HepG2 (cell line): ENCODE measurements at regions of chr11 and their contacts with region 1.

Region 1: GRCh38 chr11:65117216-65118096 is at the start of gene ZNHIT2:
- DNase-seq: peak; percentile 96
- ATAC-seq: peak; percentile 59
- H3K4me3 ChIP-seq: peak within 1 kb of the TSS; percentile 73 to 88 (median 80)
- H3K27ac ChIP-seq: peak within 1 kb of the TSS; percentile 75
- H3K4me1 ChIP-seq: peaks cover 42% of the 10 kb centered on the region
- H3K27me3 ChIP-seq: no peaks in the 10 kb centered on the region; a peak in 1 of 5 replicates
- CTCF ChIP-seq: peak; percentile 97
- EP300 ChIP-seq: 0 out of 4 replicates have a peak, but pooled peaks of 1 of the 2 experiments have one; percentile 16
- POLR2A ChIP-seq: peak in 1 of 2 experiments; percentile 87; a peak in 2 of 4 replicates
- RAD21 ChIP-seq: peak; percentile 85
- total RNA-seq, gene ZNHIT2: 5.7 and 6.5 TPM in 2 replicates

Region 2: GRCh38 chr11:65095974-65096806 is 21.3 kb before region 1 on chr11 and contains the start of gene VPS51:
- CTCF ChIA-PET with region 1: no interaction called
- POLR2A ChIA-PET with region 1: interaction called, 86 read pairs
- in situ Hi-C with region 1: no loop called
- intact Hi-C with region 1: no loop called
- DNase-seq: peak; percentile 87
- ATAC-seq: peak; percentile 98
- H3K4me3 ChIP-seq: peak within 1 kb of the TSS; percentile 78 to 85 (median 83)
- H3K27ac ChIP-seq: peak within 1 kb of the TSS; percentile 93
- H3K4me1 ChIP-seq: peaks cover 50% of the 10 kb centered on the region
- H3K27me3 ChIP-seq: no peaks in the 10 kb centered on the region; a peak in 1 of 5 replicates
- CTCF ChIP-seq: peak; percentile 28; the same call in 1 of the 2 replicates
- EP300 ChIP-seq: peak; percentile 61 to 68; a peak in 2 of 4 replicates
- POLR2A ChIP-seq: peak; percentile 83 to 88
- RAD21 ChIP-seq: peak; percentile 48; the same call in 1 of the 2 replicates
- total RNA-seq, gene VPS51: 57.4 and 76.3 TPM in 2 replicates

Region 3: GRCh38 chr11:65169164-65169641 is 51.7 kb after region 1 on chr11:
- CTCF ChIA-PET with region 1: no interaction called
- POLR2A ChIA-PET with region 1: interaction called, 72 read pairs
- in situ Hi-C with region 1: no loop called
- intact Hi-C with region 1: loop called (anchors 2 kb)
- DNase-seq: no peak
- ATAC-seq: peak; percentile 11; the same call in 2 of the 3 replicates
- H3K4me3 ChIP-seq: peak overlapping the region in 2 of 3 experiments; percentile 15 to 30; a peak in 2 of 6 replicates
- H3K27ac ChIP-seq: peak overlapping the region; percentile 55
- H3K4me1 ChIP-seq: peaks cover 82% of the 10 kb centered on the region
- H3K27me3 ChIP-seq: no peaks in the 10 kb centered on the region
- CTCF ChIP-seq: no peak
- EP300 ChIP-seq: no peak
- POLR2A ChIP-seq: no peak
- RAD21 ChIP-seq: no peak

Region 4: GRCh38 chr11:65180877-65181568 is 63.6 kb after region 1 on chr11:
- CTCF ChIA-PET with region 1: interaction called, 11 read pairs
- POLR2A ChIA-PET with region 1: interaction called, 48 read pairs
- in situ Hi-C with region 1: loop called (anchors 5 kb)
- intact Hi-C with region 1: loop called (anchors 2 kb)
- DNase-seq: peak; percentile 61
- ATAC-seq: peak; percentile 90
- H3K4me3 ChIP-seq: peak overlapping the region; percentile 82 to 94 (median 91)
- H3K27ac ChIP-seq: peak overlapping the region; percentile 77
- H3K4me1 ChIP-seq: peaks cover 25% of the 10 kb centered on the region
- H3K27me3 ChIP-seq: no peaks in the 10 kb centered on the region; a peak in 1 of 5 replicates
- CTCF ChIP-seq: peak; percentile 92
- EP300 ChIP-seq: no peak
- POLR2A ChIP-seq: peak in 1 of 2 experiments; percentile 47; a peak in 1 of 4 replicates
- RAD21 ChIP-seq: peak; percentile 69

Region 5: GRCh38 chr11:65378221-65378907 is 260.9 kb after region 1 on chr11:
- CTCF ChIA-PET with region 1: no interaction called
- POLR2A ChIA-PET with region 1: no interaction called
- in situ Hi-C with region 1: no loop called
- intact Hi-C with region 1: no loop called
- DNase-seq: no peak
- ATAC-seq: no peak
- H3K4me3 ChIP-seq: peak overlapping the region in 1 of 3 experiments; percentile 6; a peak in 1 of 6 replicates
- H3K27ac ChIP-seq: no peak overlapping the region
- H3K4me1 ChIP-seq: peaks cover 84% of the 10 kb centered on the region
- H3K27me3 ChIP-seq: peaks cover 0 to 2% of the 10 kb centered on the region in 2 experiments; a peak in 3 of 5 replicates
- CTCF ChIP-seq: peak; percentile 58
- EP300 ChIP-seq: no peak
- POLR2A ChIP-seq: no peak
- RAD21 ChIP-seq: no peak